ENCODE measurements at regions of chr16 and their contacts with region 1.

Region 1: DNA sequence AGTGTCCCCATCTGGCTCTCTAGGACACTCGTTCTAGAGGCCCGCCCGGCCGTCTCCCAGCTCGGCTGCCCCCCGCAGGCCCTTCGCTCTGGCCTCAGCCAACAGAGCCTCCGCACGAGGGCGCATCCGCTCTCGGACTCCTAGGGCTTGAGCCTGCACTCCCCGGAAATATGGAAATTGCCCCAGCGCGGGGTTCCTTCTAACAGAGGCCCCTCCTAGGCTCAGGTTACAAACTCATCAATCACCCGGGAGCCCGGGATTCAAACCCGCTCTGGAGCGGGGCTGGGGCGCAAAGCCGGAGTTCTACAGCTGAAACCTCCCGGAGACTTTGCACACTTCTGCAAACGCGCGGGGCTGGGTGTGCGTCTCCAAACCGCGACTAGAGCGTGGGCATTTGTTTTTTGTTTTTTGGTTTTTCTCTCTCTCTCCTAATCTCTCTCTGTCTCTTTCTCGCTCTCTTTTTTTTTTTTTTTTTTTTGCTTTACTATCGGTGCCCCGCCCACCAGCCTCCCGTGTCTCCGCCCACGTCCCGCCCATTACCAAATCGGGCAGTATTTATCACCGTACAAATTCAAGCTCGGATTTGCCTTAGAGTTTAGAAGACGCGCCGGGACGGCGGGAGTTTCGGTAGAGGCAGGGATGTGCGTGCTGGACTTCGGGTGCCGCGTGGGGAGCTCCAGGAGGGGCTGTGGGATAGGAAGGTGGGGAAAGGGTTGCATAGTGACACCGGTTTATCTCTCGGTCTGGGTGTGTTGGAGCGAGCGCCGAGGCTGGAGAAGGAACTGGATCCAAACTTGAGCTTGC is 2.4 kb upstream of the FOXL1 start:
- DNase-seq: peak; percentile 40 to 79 (median 62)
- ATAC-seq: peak; percentile 79 to 94 (median 87)
- H3K4me3 ChIP-seq: peak overlapping the region in 2 of 4 donors; percentile 22 to 36
- H3K27ac ChIP-seq: no peak overlapping the region
- H3K4me1 ChIP-seq: peaks cover 0 to 7% (median 0%) of the 10 kb centered on the region in 3 donors
- H3K27me3 ChIP-seq: peaks cover 0 to 56% (median 8%) of the 10 kb centered on the region in 4 donors
- CTCF ChIP-seq: peak in 2 of 4 donors; percentile 11 to 14

Region 2: DNA sequence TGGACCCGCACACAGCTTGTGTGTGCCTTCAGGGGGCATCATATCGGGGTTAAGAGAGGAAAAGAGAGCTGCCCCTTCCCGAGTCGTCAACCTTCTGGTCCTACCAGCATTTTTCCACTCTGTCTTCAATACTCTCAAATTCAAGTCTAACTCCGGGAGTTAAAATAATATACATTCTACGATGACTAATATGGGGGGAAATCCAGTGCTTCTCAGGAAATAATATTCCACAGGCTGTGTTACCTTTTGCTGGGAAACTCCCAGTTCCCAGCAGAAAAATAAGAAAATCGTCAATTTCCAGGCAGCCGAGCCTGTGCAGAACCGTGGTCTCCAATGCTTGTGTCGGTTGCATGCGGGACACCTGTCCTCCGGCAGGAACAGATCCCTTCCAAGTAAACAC is 170.6 kb before region 1 on chr16:
- intact Hi-C with region 1: no loop called
- DNase-seq: no peak
- ATAC-seq: no peak
- H3K4me3 ChIP-seq: no peak overlapping the region
- H3K27ac ChIP-seq: no peak overlapping the region
- H3K4me1 ChIP-seq: no peaks in the 10 kb centered on the region
- H3K27me3 ChIP-seq: no peaks in the 10 kb centered on the region
- CTCF ChIP-seq: no peak

Region 3: GRCh38 chr16:87059994-87060986 is 484.3 kb after region 1 on chr16:
- intact Hi-C with region 1: loop called in 1 of 3 experiments (anchors 10 kb)
- DNase-seq: no peak
- ATAC-seq: no peak
- H3K4me3 ChIP-seq: no peak overlapping the region
- H3K27ac ChIP-seq: no peak overlapping the region
- H3K4me1 ChIP-seq: no peaks in the 10 kb centered on the region
- H3K27me3 ChIP-seq: peaks cover 0 to 9% (median 0%) of the 10 kb centered on the region in 4 donors
- CTCF ChIP-seq: no peak

Region 4: DNA sequence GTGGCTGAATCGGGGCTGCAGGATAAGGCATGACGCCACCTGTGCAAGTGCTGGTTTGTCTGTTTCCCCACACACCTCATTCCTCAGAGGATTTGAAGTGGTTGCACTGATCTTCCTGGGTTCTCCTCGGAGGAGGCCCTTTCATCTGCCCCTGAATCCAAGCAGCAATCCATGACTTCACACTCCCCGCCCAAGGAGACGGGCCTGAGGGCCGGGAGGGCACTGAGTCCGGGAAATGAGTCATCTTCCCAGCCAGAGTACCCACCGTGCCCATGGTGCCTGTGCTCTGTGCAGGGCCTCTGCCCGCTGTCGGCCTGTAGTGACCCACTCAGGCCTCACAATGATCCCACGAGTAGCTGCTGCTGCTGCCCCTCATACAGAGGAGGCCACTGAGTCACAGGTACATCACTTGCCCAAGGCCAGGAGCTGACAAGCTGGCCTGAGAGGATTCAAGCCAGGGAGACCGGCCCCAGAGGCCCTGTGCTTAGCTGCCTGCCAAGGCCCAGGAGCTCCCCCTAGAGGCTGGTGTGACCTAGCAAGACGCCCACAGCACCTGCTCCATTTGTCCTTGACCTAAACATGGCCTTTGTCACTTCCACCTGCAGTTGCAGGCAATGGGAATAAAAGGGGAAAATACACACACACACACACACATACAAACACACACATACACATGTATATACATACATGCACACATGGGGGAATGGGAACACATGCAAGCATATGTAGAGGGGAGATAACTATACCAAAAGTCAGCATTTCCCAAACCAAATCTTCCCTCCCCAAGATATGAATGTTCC is 501.2 kb after region 1 on chr16:
- intact Hi-C with region 1: loop called in 1 of 3 experiments (anchors 10 kb)
- DNase-seq: peak; percentile 78 to 90 (median 82)
- ATAC-seq: peak; percentile 87 to 100 (median 97)
- H3K4me3 ChIP-seq: no peak overlapping the region
- H3K27ac ChIP-seq: no peak overlapping the region
- H3K4me1 ChIP-seq: no peaks in the 10 kb centered on the region
- H3K27me3 ChIP-seq: no peaks in the 10 kb centered on the region
- CTCF ChIP-seq: peak in 3 of 4 donors; percentile 39 to 52 (median 50)